Calu3 (cell line): ENCODE measurements at regions of chr1 and their contacts with region 1.

Region 1: GRCh38 chr1:164786980-164787833 is 228.2 kb downstream of the PBX1 start:
- DNase-seq: peak; percentile 81
- H3K4me3 Mint-ChIP-seq: no peak overlapping the region
- H3K27ac Mint-ChIP-seq: no peak overlapping the region
- H3K4me1 Mint-ChIP-seq: peaks cover 17% of the 10 kb centered on the region
- H3K27me3 Mint-ChIP-seq: no peaks in the 10 kb centered on the region
- CTCF ChIP-seq: peak; percentile 92

Region 2: GRCh38 chr1:163535807-163536206 is 1251.4 kb before region 1 on chr1:
- CTCF ChIA-PET with region 1: no interaction called
- intact Hi-C with region 1: loop called (anchors 5 kb)
- DNase-seq: no peak
- H3K4me3 Mint-ChIP-seq: no peak overlapping the region
- H3K27ac Mint-ChIP-seq: no peak overlapping the region
- H3K4me1 Mint-ChIP-seq: no peaks in the 10 kb centered on the region
- H3K27me3 Mint-ChIP-seq: peaks cover 9% of the 10 kb centered on the region
- CTCF ChIP-seq: no peak

Region 3: DNA sequence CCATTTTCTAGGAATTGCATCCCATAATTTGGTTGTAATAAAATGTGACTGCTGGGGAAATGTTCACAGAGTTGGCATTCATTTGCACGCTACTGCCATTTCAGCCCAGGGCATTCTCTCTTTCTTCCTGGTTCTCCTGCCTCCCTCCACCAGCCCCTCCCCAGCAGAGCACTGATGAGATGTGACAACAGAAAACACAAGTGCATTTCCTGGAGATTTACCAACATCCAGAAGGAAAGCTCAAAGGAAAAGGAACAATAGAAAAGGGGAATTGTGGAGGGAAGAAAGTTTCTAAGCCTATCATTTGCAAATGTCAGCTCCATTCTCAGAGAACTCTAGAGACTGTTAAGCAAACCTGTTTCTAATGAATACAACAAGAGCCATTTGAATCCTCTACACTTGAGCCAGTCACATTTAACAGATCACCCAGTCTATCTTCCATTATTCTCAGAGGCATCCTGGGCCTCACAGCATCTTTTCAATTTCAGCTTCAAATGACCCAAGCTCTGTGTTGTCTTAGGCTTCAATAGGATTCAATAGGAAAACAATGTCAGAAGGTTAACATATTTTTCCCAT is 623.8 kb before region 1 on chr1:
- CTCF ChIA-PET with region 1: no interaction called
- intact Hi-C with region 1: loop called (anchors 5 kb)
- DNase-seq: no peak
- H3K4me3 Mint-ChIP-seq: no peak overlapping the region
- H3K27ac Mint-ChIP-seq: no peak overlapping the region
- H3K4me1 Mint-ChIP-seq: no peaks in the 10 kb centered on the region
- H3K27me3 Mint-ChIP-seq: no peaks in the 10 kb centered on the region
- CTCF ChIP-seq: no peak

Region 4: DNA sequence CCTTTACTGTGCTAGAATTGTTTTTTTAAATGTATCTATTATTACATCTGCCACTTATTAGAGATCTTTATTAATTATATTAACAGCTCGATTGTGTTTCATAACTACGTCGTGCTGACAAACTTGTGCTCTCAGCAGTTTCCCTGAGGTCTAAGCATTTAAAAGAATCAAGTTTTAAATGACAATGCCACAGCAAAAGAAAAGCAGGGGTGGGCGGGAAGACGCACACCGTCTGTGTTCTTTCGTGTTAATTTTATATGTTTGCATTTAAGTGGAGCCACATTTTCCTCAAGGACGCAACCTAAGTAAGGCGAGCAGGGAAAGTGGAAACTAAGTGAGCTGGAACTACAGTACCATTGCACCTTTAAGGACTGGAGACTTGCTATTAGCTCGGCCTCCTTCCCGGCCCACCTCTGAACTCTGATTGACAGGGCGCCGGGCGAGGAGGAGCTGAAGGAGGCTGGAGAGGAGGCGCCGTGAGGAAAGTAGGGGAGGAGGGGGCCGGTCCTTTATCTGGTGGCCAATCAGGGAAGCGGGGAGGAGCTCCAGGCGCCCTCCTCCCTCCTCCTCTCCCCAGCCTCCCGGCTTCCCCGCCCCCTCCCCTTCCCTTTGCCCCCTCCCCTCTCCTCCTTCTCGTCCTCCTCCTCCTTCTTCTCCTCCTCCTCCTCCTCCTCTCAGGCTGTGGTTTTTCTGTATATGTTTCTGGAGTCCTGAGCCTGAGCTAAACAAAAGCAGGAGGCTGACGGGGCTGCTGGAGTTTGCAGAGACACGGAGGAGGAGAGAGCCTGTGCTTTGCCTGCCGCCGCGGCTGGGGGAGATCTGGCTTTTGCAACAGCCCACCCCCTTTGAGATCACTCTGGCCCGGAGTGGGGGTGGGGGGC is 228.5 kb before region 1 on chr1 and contains the start of gene PBX1:
- CTCF ChIA-PET with region 1: no interaction called
- intact Hi-C with region 1: loop called (anchors 2 kb)
- DNase-seq: peak; percentile 98
- H3K4me3 Mint-ChIP-seq: peak within 1 kb of the TSS; percentile 73
- H3K27ac Mint-ChIP-seq: peak within 1 kb of the TSS; percentile 75
- H3K4me1 Mint-ChIP-seq: peaks cover 19% of the 10 kb centered on the region
- H3K27me3 Mint-ChIP-seq: no peaks in the 10 kb centered on the region
- CTCF ChIP-seq: no peak
- total RNA-seq, gene PBX1: 21.8 and 22.5 TPM in 2 replicates